ENCODE measurements at regions of chr6 and their contacts with region 1.

Region 1: DNA sequence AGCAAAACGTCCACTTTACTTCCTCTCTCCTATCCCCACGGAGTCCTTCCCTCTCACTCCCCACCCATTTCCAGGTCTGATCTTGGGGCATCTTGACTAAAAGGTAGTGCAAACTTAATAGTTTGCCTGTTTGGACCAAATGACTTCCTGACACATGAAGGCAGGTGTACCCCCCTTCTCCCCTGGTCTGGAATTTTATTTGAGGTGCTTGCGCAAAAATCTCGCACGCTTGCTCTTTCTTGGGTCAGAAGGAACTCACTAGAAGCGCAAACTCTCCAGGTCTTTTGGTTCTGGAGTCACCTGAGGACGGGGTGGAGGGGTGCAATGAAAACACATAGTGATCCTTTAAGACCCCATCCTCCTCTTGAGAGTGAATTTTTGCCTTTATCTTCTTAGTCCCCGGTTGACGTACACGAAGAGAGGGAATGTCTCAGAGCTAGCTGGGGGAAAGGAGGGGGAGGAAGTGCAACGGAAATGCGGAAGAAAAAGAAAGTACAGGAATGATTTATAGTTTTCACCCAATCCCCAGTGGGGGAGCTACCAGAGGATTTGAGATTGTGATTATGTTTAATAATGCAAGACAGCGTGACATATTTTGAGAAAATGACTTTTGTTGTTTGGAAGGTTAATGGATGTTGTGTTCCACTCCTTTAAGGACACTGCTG is 4.9 kb downstream of the ADGRB3 start:
- DNase-seq: no peak
- H3K4me3 ChIP-seq: peak overlapping the region; percentile 32 to 52
- H3K27ac ChIP-seq: peak overlapping the region in 1 of 2 donors; percentile 43
- H3K4me1 ChIP-seq: no peaks in the 10 kb centered on the region
- H3K27me3 ChIP-seq: no peaks in the 10 kb centered on the region
- CTCF ChIP-seq: no peak

Region 2: GRCh38 chr6:68738039-68738438 is 98.1 kb after region 1 on chr6:
- intact Hi-C with region 1: loop called (anchors 5 kb)
- DNase-seq: no peak
- H3K4me3 ChIP-seq: no peak overlapping the region
- H3K27ac ChIP-seq: no peak overlapping the region
- H3K4me1 ChIP-seq: peaks cover 0 to 5% of the 10 kb centered on the region in 2 donors
- H3K27me3 ChIP-seq: no peaks in the 10 kb centered on the region
- CTCF ChIP-seq: no peak

Region 3: GRCh38 chr6:68771426-68771825 is 131.5 kb after region 1 on chr6:
- intact Hi-C with region 1: no loop called
- DNase-seq: no peak
- H3K4me3 ChIP-seq: no peak overlapping the region
- H3K27ac ChIP-seq: no peak overlapping the region
- H3K4me1 ChIP-seq: no peaks in the 10 kb centered on the region
- H3K27me3 ChIP-seq: no peaks in the 10 kb centered on the region
- CTCF ChIP-seq: no peak